ENCODE measurements at regions of chr7 and their contacts with region 1.

Region 1: DNA sequence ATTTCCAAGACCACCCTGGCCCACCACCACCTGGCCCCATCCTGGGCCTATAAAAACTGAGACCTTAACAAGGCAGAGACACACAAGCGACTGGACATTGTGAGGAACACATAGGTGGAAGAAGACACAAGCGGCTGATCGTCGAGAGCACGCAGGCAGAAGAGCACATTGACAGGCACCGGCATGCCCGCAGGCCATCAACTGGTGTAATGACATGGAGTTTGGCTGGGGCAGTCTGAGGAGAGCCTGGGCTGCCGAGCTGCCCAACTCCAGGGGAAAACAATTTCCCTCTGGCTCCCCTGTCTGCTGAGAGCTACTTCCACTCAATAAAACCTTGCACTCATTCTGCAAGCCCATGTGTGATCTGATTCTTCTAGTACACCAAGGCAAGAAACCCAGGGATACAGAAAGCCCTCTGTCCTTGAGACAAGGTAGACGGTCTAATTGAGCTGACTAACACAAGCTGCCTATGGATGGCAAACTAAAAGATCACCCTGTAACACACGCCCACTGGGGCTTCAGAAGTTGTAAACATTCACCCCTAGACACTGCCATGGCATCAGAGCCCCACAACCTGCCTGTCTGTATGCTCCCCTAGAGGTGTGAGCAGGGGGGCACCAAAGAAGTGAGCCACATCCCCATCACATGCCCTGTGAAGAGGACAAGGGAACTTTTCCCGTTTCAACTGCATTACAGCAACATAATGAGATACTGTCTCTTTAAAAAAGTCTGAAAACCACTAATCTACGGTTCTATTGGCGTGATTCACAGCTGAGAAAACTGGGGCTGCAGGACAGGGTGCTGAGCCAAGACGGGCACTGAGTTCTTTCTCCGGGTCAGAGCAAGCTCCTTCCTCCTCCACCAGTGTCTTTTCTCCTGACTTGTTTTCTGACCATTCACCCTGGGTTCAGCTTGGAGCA is 18.5 kb upstream of the TNS3 start:
- DNase-seq: no peak
- ATAC-seq: peak; percentile 56
- H3K4me3 Mint-ChIP-seq: peak overlapping the region; percentile 59
- H3K27ac Mint-ChIP-seq: peak overlapping the region; percentile 90
- H3K4me1 Mint-ChIP-seq: peaks cover 49% of the 10 kb centered on the region
- H3K27me3 Mint-ChIP-seq: no peaks in the 10 kb centered on the region
- CTCF ChIP-seq: no peak

Region 2: GRCh38 chr7:47543706-47544105 is 56.8 kb before region 1 on chr7:
- CTCF ChIA-PET with region 1: interaction called, 4 read pairs
- POLR2A ChIA-PET with region 1: no interaction called
- intact Hi-C with region 1: loop called (anchors 1 kb)
- DNase-seq: peak; percentile 40
- ATAC-seq: peak; percentile 94
- H3K4me3 Mint-ChIP-seq: peak overlapping the region; percentile 36
- H3K27ac Mint-ChIP-seq: peak overlapping the region; percentile 47
- H3K4me1 Mint-ChIP-seq: peaks cover 47% of the 10 kb centered on the region
- H3K27me3 Mint-ChIP-seq: no peaks in the 10 kb centered on the region
- CTCF ChIP-seq: no peak

Region 3: DNA sequence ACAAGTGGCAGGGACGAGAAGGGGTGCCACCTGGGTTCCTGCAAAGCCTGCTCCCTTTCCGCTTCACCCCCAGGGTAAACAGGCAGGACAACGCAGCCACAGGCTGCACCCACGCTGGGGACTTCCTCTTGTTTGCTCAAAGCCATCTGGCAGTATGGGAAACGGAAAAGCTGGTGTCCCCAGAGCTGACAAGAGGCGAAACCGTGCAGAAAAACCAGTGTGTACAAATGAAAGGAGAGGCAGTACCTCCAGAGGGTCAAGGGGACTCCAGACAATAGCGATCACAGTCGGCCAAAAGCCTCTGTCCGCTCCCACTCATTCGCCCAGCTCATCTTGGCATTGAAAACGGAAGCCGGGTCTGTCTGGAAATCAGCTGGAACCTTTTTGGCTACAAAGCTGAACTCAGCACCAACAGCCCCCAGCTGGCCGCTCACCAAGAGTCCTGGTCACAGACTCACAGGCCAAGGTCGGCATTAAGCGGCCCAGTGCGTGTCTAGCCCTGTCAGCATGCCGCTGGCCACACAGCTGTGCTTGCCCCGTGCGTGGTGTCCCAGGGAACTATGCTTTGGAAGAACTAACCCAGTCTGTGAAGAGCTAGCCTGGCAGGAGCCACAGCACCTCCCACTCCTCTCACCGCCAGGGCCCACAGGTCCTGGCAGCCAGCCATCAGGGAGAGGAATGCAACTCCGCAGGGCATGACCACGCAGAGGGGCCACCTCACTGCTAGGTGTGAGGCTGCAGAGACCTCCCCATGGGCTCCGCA is 28.9 kb before region 1 on chr7:
- CTCF ChIA-PET with region 1: no interaction called
- POLR2A ChIA-PET with region 1: interaction called, 11 read pairs
- intact Hi-C with region 1: no loop called
- DNase-seq: no peak
- ATAC-seq: peak; percentile 32
- H3K4me3 Mint-ChIP-seq: peak overlapping the region; percentile 75
- H3K27ac Mint-ChIP-seq: peak overlapping the region; percentile 87
- H3K4me1 Mint-ChIP-seq: peaks cover 90% of the 10 kb centered on the region
- H3K27me3 Mint-ChIP-seq: no peaks in the 10 kb centered on the region
- CTCF ChIP-seq: no peak

Region 4: GRCh38 chr7:47581806-47582763 is 18.4 kb before region 1 on chr7 and contains the start of gene TNS3:
- CTCF ChIA-PET with region 1: no interaction called
- POLR2A ChIA-PET with region 1: interaction called, 18 read pairs
- intact Hi-C with region 1: loop called (anchors 2 kb)
- DNase-seq: peak; percentile 64
- ATAC-seq: peak; percentile 80
- H3K4me3 Mint-ChIP-seq: peak within 1 kb of the TSS; percentile 87
- H3K27ac Mint-ChIP-seq: peak within 1 kb of the TSS; percentile 83
- H3K4me1 Mint-ChIP-seq: peaks cover 57% of the 10 kb centered on the region
- H3K27me3 Mint-ChIP-seq: no peaks in the 10 kb centered on the region
- CTCF ChIP-seq: no peak
- total RNA-seq, gene TNS3: 29.4 and 30.3 TPM in 2 replicates

Region 5: GRCh38 chr7:47627580-47628283 is 27.3 kb after region 1 on chr7:
- CTCF ChIA-PET with region 1: interaction called, 7 read pairs
- POLR2A ChIA-PET with region 1: interaction called, 12 read pairs
- intact Hi-C with region 1: loop called (anchors 1 kb)
- DNase-seq: no peak
- ATAC-seq: peak; percentile 71
- H3K4me3 Mint-ChIP-seq: peak overlapping the region; percentile 33
- H3K27ac Mint-ChIP-seq: peak overlapping the region; percentile 71
- H3K4me1 Mint-ChIP-seq: peaks cover 64% of the 10 kb centered on the region
- H3K27me3 Mint-ChIP-seq: no peaks in the 10 kb centered on the region
- CTCF ChIP-seq: no peak

Region 6: GRCh38 chr7:47724335-47724982 is 124.0 kb after region 1 on chr7:
- CTCF ChIA-PET with region 1: no interaction called
- POLR2A ChIA-PET with region 1: interaction called, 4 read pairs
- intact Hi-C with region 1: loop called (anchors 1 kb)
- DNase-seq: no peak
- ATAC-seq: no peak
- H3K4me3 Mint-ChIP-seq: peak overlapping the region; percentile 66
- H3K27ac Mint-ChIP-seq: peak overlapping the region; percentile 72
- H3K4me1 Mint-ChIP-seq: peaks cover 80% of the 10 kb centered on the region
- H3K27me3 Mint-ChIP-seq: no peaks in the 10 kb centered on the region
- CTCF ChIP-seq: no peak

Region 7: DNA sequence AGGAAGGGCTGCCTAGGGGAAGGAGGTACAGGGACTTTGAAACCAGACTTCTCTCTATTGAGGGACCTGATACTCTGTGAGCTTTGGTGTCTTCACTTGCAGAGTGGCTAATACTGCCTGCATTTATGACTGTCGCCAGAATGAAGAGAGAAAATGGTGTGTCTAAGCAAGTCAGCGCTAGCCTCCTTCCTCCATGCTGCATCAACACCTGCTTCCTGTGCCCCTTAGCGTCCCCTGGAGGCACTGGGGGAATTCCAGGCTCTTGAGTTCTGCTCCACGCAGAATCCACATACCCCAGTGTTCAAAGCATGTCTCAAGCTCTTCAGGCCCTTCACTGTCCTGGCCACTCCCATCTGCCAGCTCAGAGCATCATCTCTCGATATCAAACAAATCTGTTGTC is 207.3 kb after region 1 on chr7:
- CTCF ChIA-PET with region 1: no interaction called
- POLR2A ChIA-PET with region 1: no interaction called
- intact Hi-C with region 1: loop called (anchors 5 kb)
- DNase-seq: no peak
- ATAC-seq: peak; percentile 86
- H3K4me3 Mint-ChIP-seq: no peak overlapping the region
- H3K27ac Mint-ChIP-seq: no peak overlapping the region
- H3K4me1 Mint-ChIP-seq: peaks cover 42% of the 10 kb centered on the region
- H3K27me3 Mint-ChIP-seq: no peaks in the 10 kb centered on the region
- CTCF ChIP-seq: no peak